ENCODE measurements at regions of chr6 and their contacts with region 1.

Region 1: GRCh38 chr6:148578245-148578732 is 168.5 kb upstream of the UST start:
- DNase-seq: peak; percentile 74
- ATAC-seq: peak; percentile 96
- H3K4me3 Mint-ChIP-seq: no peak overlapping the region
- H3K27ac Mint-ChIP-seq: no peak overlapping the region
- H3K4me1 Mint-ChIP-seq: peaks cover 6% of the 10 kb centered on the region
- H3K27me3 Mint-ChIP-seq: peaks cover 44% of the 10 kb centered on the region

Region 2: GRCh38 chr6:148304976-148305375 is 273.3 kb before region 1 on chr6:
- CTCF ChIA-PET with region 1: no interaction called
- DNase-seq: no peak
- ATAC-seq: no peak
- H3K4me3 Mint-ChIP-seq: no peak overlapping the region
- H3K27ac Mint-ChIP-seq: no peak overlapping the region
- H3K4me1 Mint-ChIP-seq: no peaks in the 10 kb centered on the region
- H3K27me3 Mint-ChIP-seq: no peaks in the 10 kb centered on the region

Region 3: GRCh38 chr6:148342357-148343046 is 235.8 kb before region 1 on chr6 and contains the start of gene SASH1:
- CTCF ChIA-PET with region 1: no interaction called
- DNase-seq: peak; percentile 41
- ATAC-seq: peak; percentile 47
- H3K4me3 Mint-ChIP-seq: peak within 1 kb of the TSS; percentile 46
- H3K27ac Mint-ChIP-seq: no peak within 1 kb of the TSS
- H3K4me1 Mint-ChIP-seq: peaks cover 7% of the 10 kb centered on the region
- H3K27me3 Mint-ChIP-seq: peaks cover 60% of the 10 kb centered on the region
- total RNA-seq, gene SASH1: 0.03 to 0.47 TPM

Region 4: DNA sequence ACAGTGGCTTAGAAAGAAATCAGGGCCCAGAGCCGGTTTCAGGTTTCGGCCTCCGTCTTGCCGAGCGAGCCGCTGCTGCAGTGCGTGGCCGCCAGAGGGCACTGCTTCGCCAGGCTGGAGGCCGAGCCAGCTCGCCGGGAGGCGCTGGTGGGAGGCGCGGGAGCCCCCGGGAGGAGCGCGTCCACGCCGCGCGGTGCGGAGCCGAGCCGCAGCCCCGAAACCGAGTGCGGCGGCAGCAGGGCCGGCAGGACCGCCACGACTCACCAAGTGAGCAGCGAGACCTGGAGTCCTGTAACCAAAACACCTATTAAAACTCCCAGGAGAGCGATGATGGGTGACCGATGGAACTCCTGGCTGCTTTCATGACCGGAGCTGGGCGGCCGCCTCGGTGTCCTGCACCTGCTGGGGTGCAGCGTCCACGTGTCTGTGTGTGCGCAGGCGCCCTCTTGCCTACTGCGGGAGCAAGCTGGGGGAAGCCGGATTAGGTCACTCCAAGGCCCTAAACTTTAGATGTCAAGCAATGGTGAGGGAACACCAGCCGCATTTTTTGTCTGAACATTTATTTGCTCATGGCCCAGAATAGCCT is 18.3 kb before region 1 on chr6:
- CTCF ChIA-PET with region 1: interaction called, 22 read pairs
- DNase-seq: peak; percentile 76
- ATAC-seq: peak; percentile 87
- H3K4me3 Mint-ChIP-seq: no peak overlapping the region
- H3K27ac Mint-ChIP-seq: no peak overlapping the region
- H3K4me1 Mint-ChIP-seq: peaks cover 14% of the 10 kb centered on the region
- H3K27me3 Mint-ChIP-seq: peaks cover 50% of the 10 kb centered on the region

Region 5: GRCh38 chr6:148947621-148948444 is 369.5 kb after region 1 on chr6:
- CTCF ChIA-PET with region 1: interaction called, 13 read pairs
- DNase-seq: peak; percentile 84
- ATAC-seq: peak; percentile 92
- H3K4me3 Mint-ChIP-seq: no peak overlapping the region
- H3K27ac Mint-ChIP-seq: no peak overlapping the region
- H3K4me1 Mint-ChIP-seq: peaks cover 4% of the 10 kb centered on the region
- H3K27me3 Mint-ChIP-seq: peaks cover 3% of the 10 kb centered on the region

Measured in activated CD8-positive, alpha-beta memory T cell treated with anti-CD3 and anti-CD28 coated beads, Interleukin-2, amount 10 ng/mL, durations not matched to agents 7 days and 5 days (primary cell).